Activated CD4-positive, alpha-beta memory T cell treated with anti-CD3 and anti-CD28 coated beads, Interleukin-2, amount 10 ng/mL, durations not matched to agents 7 days and 5 days (primary cell): ENCODE measurements at regions of chr1 and their contacts with region 1.

Region 1: DNA sequence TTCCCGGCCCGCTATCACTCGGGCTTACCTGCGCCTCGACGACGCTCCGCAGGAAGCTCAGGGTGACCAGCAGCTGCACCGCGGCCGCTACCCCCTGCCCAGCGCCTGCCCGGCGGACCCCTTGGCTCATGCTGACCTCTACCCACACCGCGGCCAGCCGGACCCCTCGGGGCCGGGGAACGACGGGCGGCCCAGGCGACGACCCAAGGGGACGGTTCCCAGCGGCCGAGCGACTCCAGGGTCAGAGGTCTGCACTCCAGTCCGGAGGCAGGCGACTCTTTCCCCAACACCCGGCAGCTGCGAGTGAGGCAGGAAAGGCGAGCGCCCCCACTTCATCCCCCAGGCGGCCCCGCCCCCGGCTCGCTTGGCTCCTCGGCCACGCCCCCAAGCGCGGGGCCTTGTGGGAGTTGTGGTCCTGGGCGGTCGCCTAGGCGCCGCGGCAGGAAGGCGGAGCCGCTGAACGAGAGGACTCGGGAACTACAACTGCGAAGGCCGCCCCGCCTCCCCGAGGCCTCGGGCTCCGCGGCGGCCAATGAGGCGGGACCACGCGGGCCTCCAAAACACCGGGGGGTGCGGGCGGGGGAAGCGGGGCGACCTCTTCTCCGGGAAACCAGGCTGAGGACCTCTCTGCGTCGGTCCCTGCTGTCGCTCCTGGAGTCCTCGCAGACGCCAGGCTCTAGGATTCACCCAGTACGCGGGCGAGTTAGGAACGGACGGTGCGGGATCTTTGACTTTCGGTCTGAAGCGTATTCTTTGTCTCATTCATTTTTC is at the start of gene ERO1B:
- DNase-seq: peak; percentile 96
- H3K4me3 Mint-ChIP-seq: peak within 1 kb of the TSS; percentile 84
- H3K27ac Mint-ChIP-seq: peak within 1 kb of the TSS; percentile 34
- H3K4me1 Mint-ChIP-seq: peaks cover 41% of the 10 kb centered on the region
- H3K27me3 Mint-ChIP-seq: peaks cover 8% of the 10 kb centered on the region
- total RNA-seq, gene ERO1B: 4.1 TPM

Region 2: GRCh38 chr1:236108027-236108648 is 173.7 kb before region 1 on chr1:
- CTCF ChIA-PET with region 1: interaction called, 12 read pairs
- POLR2A ChIA-PET with region 1: no interaction called
- DNase-seq: no peak
- H3K4me3 Mint-ChIP-seq: no peak overlapping the region
- H3K27ac Mint-ChIP-seq: no peak overlapping the region
- H3K4me1 Mint-ChIP-seq: peaks cover 11% of the 10 kb centered on the region
- H3K27me3 Mint-ChIP-seq: no peaks in the 10 kb centered on the region

Region 3: DNA sequence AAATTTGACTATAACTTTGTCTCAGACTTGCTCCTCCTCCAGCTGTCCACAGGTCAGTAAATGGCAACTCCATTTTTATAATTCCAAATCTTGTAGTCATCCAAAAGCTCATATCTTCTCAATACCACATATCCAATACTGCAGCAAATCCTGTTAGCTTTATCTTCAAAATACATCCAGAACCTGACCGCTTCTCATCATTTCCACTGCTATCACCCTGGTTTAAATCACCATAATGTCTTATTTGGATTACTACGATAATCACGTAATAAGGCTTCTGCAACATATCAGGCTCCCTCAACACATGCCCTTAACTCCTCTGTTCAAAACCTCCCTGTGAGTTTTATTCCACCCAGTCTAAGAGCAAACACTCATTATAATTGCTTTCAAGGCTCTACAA is 34.6 kb before region 1 on chr1:
- CTCF ChIA-PET with region 1: no interaction called
- POLR2A ChIA-PET with region 1: no interaction called
- DNase-seq: no peak
- H3K4me3 Mint-ChIP-seq: no peak overlapping the region
- H3K27ac Mint-ChIP-seq: no peak overlapping the region
- H3K4me1 Mint-ChIP-seq: no peaks in the 10 kb centered on the region
- H3K27me3 Mint-ChIP-seq: no peaks in the 10 kb centered on the region

Region 4: DNA sequence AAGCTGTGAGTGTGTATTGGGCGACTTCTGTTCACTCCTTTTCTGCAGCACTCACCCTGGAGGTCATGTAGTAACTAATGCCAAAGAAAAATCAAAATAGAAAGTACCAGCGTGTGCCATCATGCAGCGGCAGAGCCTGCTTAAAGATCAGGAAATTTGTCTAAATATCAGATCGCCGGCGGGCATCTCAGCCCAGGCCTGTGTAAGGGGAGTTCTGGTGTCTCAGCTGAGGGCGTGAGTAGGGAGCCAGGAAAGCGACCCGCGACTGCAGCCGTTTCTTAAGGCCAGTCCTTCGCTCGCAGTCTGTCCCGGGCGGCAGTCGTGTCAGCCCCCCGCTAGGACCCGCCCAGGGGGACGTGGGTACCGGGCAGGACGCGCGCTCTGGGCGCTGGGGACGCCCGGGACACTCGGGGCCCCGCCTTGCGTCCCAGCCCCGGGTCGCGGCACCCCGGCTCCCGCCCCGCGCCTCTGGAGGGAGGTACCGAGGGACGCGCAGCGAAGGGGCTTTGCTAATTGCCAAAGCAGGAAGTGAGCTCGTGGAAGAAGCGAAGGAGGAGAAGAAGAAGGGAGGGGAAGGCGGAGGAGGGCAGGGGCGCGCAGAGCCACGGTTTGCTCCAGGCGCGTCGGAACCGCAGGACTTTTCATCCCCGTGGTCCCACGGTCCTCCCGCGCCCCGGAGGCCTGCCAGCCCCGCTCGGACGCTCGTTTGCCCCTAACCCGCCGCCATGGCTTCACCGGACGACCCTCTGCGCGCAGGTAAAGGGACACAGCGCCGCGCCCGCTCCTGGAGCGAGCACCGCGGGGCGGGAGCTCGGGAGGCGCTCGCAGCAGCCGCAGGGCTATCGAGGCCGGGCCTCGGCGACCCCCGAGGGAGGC is 113.3 kb after region 1 on chr1:
- CTCF ChIA-PET with region 1: no interaction called
- POLR2A ChIA-PET with region 1: interaction called, 10 read pairs
- DNase-seq: peak; percentile 66
- H3K4me3 Mint-ChIP-seq: peak overlapping the region; percentile 87
- H3K27ac Mint-ChIP-seq: peak overlapping the region; percentile 80
- H3K4me1 Mint-ChIP-seq: peaks cover 37% of the 10 kb centered on the region
- H3K27me3 Mint-ChIP-seq: peaks cover 6% of the 10 kb centered on the region